ENCODE measurements at regions of chr3 and their contacts with region 1.

Region 1: GRCh38 chr3:66456711-66457173 is 44.1 kb downstream of the LRIG1 start:
- DNase-seq: no peak
- H3K4me3 ChIP-seq: no peak overlapping the region
- H3K27ac ChIP-seq: peak overlapping the region; percentile 8 to 77 (median 38)
- H3K4me1 ChIP-seq: peaks cover 23 to 31% (median 23%) of the 10 kb centered on the region in 4 donors
- H3K27me3 ChIP-seq: no peaks in the 10 kb centered on the region
- CTCF ChIP-seq: no peak
- EP300 ChIP-seq: no peak
- POLR2A ChIP-seq: no peak

Region 2: DNA sequence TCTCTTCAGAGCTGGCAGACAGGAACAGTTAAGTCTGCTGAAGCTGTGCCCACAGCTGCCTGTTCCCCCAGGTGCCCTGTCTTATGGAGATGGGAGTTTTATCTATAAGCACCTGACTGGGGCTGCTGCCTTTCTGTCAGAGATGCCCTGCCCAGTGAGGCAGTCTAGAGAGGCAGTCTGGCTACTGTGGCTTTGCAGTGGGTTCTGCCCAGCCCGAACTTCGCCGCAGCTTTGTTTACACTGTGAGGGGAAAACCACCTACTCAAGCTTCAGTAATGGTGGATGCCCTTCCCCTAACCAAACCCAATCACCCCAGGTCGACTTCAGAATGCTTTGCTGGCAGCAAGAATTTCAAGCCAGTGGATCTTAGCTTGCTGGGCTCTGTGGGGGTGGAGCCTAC is 144.7 kb before region 1 on chr3:
- in situ Hi-C with region 1: no loop called
- intact Hi-C with region 1: no loop called
- DNase-seq: no peak
- H3K4me3 ChIP-seq: no peak overlapping the region
- H3K27ac ChIP-seq: no peak overlapping the region
- H3K4me1 ChIP-seq: no peaks in the 10 kb centered on the region
- H3K27me3 ChIP-seq: no peaks in the 10 kb centered on the region
- CTCF ChIP-seq: no peak
- EP300 ChIP-seq: no peak
- POLR2A ChIP-seq: no peak

Region 3: GRCh38 chr3:66418475-66418931 is 38.2 kb before region 1 on chr3:
- in situ Hi-C with region 1: no loop called
- intact Hi-C with region 1: loop called (anchors 2 kb)
- DNase-seq: peak; percentile 48
- H3K4me3 ChIP-seq: no peak overlapping the region
- H3K27ac ChIP-seq: peak overlapping the region; percentile 61 to 87 (median 69)
- H3K4me1 ChIP-seq: peaks cover 20 to 44% (median 33%) of the 10 kb centered on the region in 4 donors
- H3K27me3 ChIP-seq: no peaks in the 10 kb centered on the region
- CTCF ChIP-seq: no peak
- EP300 ChIP-seq: peak; percentile 74
- POLR2A ChIP-seq: no peak

Region 4: GRCh38 chr3:66527246-66527645 is 70.5 kb after region 1 on chr3:
- in situ Hi-C with region 1: no loop called
- intact Hi-C with region 1: no loop called
- DNase-seq: no peak
- H3K4me3 ChIP-seq: no peak overlapping the region
- H3K27ac ChIP-seq: no peak overlapping the region
- H3K4me1 ChIP-seq: no peaks in the 10 kb centered on the region
- H3K27me3 ChIP-seq: no peaks in the 10 kb centered on the region
- CTCF ChIP-seq: no peak
- EP300 ChIP-seq: no peak
- POLR2A ChIP-seq: no peak

Measured in transverse colon (tissue), 4 donors.